Heart right ventricle (tissue), 16 donors: ENCODE measurements at regions of chr5 and their contacts with region 1.

Region 1: GRCh38 chr5:142769741-142770631 is at the start of gene ARHGAP26:
- DNase-seq: peak; percentile 97 to 98
- ATAC-seq: peak; percentile 97 to 98 (median 98)
- H3K4me3 ChIP-seq: peak within 1 kb of the TSS; percentile 58 to 98 (median 92)
- H3K27ac ChIP-seq: peak within 1 kb of the TSS; percentile 80 to 95 (median 92)
- H3K4me1 ChIP-seq: peaks cover 8 to 47% (median 40%) of the 10 kb centered on the region in 9 donors
- H3K27me3 ChIP-seq: no peaks in the 10 kb centered on the region
- CTCF ChIP-seq: peak in 6 of 9 donors; percentile 13 to 63 (median 50)
- total RNA-seq, gene ARHGAP26: 31.7 to 45.8 (median 39.1) TPM

Region 2: GRCh38 chr5:142716963-142717362 is 53.0 kb before region 1 on chr5:
- intact Hi-C with region 1: loop called in 3 of 10 experiments (anchors 5 kb)
- DNase-seq: peak; percentile 38 to 62
- ATAC-seq: peak; percentile 21 to 72 (median 61)
- H3K4me3 ChIP-seq: peak overlapping the region in 1 of 10 donors; percentile 22
- H3K27ac ChIP-seq: peak overlapping the region; percentile 13 to 82 (median 68)
- H3K4me1 ChIP-seq: peaks cover 6 to 54% (median 34%) of the 10 kb centered on the region in 9 donors
- H3K27me3 ChIP-seq: no peaks in the 10 kb centered on the region
- CTCF ChIP-seq: peak in 7 of 9 donors; percentile 32 to 64 (median 43)

Region 3: DNA sequence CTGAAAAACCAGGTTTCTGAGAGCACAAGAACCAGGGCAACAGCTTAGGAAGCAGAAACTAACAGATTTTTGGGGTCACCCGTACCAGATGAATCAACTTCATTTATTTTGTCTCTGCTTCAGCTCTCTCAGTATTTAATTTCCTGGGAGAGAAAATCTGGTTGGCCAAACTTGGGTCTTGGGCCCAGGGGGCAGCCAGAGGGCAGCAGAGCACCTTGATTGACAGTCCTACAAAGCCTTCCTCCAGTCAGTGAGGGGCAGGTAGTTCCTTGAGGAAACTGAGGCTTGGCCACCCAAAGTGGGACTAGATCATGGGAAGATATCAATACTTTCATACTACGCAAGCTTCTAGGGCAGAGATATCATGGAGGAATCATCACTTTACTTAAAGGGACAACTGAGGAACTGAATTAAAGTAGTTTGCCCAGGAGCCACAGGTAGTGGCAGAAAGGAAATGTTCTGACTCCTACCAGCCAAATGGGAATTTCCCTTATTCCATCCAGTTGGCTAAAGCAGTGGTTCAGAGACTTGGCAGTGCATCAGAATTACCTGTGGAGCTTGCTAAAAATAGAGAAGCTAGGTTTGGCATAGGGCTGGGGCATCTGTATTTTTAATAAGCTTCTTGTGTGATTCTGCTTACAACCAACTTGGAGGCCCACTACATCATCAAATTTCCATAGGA is 21.3 kb before region 1 on chr5:
- intact Hi-C with region 1: loop called in 1 of 10 experiments (anchors 2 kb)
- DNase-seq: peak; percentile 23 to 25
- ATAC-seq: peak in 4 of 8 donors; percentile 27 to 42 (median 33)
- H3K4me3 ChIP-seq: no peak overlapping the region
- H3K27ac ChIP-seq: peak overlapping the region in 2 of 10 donors; percentile 15 to 22
- H3K4me1 ChIP-seq: peaks cover 6 to 76% (median 55%) of the 10 kb centered on the region in 9 donors
- H3K27me3 ChIP-seq: no peaks in the 10 kb centered on the region
- CTCF ChIP-seq: peak; percentile 22 to 68 (median 54)

Region 4: DNA sequence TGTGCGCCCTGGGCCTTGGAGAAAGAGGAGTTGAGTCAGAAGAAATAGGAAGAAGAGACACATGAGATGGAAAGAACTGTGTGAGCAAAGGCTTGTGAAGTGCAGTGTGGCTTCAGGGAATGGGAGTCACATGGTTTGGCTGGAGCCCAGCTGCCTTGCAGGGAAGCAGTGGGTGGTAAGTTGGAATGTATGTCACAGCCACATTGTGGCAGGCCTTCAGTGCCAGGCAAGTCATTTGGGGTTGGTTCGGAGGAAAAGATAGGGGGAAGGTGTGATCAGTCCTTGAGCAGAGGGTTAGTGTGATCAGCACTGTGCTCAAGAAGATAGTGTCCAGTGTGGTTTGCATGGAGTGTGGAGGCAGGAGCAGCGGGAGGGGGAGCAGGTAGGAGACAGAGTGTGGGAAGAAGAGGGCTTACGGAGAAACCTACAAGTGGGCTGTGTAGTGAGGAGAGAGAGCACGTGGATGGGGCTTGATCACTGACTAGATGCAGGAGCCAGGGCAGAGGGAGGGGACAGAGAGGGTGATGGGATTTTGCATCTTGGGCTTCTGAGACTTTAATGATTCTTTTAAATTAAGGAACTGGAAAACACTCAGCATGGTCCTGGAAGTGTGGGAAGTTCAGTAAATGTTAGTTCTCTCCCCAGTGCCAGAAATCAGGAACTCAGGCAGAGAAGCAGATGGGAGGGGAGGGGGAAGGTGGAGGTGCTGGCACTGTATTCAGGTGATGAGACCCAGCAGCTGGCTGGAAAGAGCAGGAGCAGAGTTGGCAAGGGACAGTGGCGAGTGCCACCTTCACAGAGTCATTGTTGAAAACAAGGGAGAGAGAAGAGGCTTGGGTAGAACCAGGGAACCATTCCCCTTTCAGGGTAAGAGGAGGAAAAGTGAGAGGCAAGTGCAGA is 46.8 kb after region 1 on chr5:
- intact Hi-C with region 1: loop called in 4 of 10 experiments (anchors 2 to 5 kb)
- DNase-seq: peak; percentile 46 to 56
- ATAC-seq: peak in 5 of 8 donors; percentile 25 to 40 (median 36)
- H3K4me3 ChIP-seq: no peak overlapping the region
- H3K27ac ChIP-seq: peak overlapping the region; percentile 1 to 91 (median 49)
- H3K4me1 ChIP-seq: peaks cover 32 to 97% (median 81%) of the 10 kb centered on the region in 9 donors
- H3K27me3 ChIP-seq: no peaks in the 10 kb centered on the region
- CTCF ChIP-seq: no peak

Region 5: DNA sequence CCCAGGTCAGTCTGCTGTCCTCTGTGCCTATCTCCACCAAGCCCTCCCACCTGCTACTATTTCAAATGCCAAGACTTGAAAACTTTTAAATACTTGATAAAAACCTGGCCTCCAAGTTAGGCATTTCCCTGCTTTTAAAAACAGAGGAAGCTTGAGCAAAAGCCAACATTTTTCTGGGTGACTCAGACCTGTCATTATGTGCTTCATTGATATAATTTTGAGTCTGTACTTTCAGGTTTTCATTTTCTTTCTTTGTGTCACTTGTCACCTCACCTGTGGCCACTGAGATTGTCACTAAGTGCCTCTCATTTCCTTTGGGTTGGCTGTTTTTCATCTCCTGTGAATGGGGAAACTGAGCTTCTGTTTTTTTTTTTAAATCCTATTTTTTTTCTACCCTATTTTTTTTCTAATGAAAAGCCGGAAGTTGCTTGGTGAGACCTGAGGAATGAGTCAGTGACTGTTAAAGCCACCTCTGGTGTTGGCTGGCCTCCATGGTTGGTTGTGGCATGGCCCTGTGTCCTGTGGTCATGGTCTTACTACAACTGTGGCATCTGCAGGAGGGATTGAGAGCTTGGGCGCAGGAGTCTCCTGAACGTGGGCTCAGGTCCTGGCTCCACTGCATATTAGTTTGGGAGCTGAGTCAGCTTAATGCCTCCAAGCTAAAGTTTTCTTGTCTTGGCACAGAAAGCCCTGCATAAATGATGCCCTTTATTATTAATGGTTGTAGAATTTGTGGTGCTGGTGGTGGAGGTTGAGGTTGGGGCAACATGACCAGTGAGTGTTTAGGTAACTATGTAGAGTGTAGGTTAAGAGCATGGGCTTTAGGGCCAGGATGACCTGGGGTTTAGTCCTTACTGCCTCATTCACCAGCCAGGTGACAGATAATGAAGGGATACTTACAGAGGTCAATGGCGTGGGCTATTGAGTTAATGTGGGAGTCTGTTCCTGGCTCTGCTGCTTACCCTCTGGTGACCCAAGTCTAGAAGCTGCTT is 57.1 kb after region 1 on chr5:
- intact Hi-C with region 1: loop called in 1 of 10 experiments (anchors 5 kb)
- DNase-seq: no peak
- ATAC-seq: peak in 4 of 8 donors; percentile 7 to 29 (median 16)
- H3K4me3 ChIP-seq: no peak overlapping the region
- H3K27ac ChIP-seq: peak overlapping the region in 7 of 10 donors; percentile 18 to 76 (median 68)
- H3K4me1 ChIP-seq: peaks cover 24 to 97% (median 82%) of the 10 kb centered on the region in 9 donors
- H3K27me3 ChIP-seq: no peaks in the 10 kb centered on the region
- CTCF ChIP-seq: no peak

Region 6: GRCh38 chr5:142865414-142866045 is 95.5 kb after region 1 on chr5:
- intact Hi-C with region 1: loop called (anchors 2 to 5 kb)
- DNase-seq: no peak
- ATAC-seq: no peak
- H3K4me3 ChIP-seq: no peak overlapping the region
- H3K27ac ChIP-seq: peak overlapping the region in 4 of 10 donors; percentile 20 to 77 (median 36)
- H3K4me1 ChIP-seq: peaks cover 21 to 96% (median 84%) of the 10 kb centered on the region in 9 donors
- H3K27me3 ChIP-seq: no peaks in the 10 kb centered on the region
- CTCF ChIP-seq: no peak

Region 7: GRCh38 chr5:142874537-142874936 is 104.6 kb after region 1 on chr5:
- intact Hi-C with region 1: loop called in 6 of 10 experiments (anchors 5 kb)
- DNase-seq: peak; percentile 85 to 88
- ATAC-seq: peak; percentile 27 to 79 (median 69)
- H3K4me3 ChIP-seq: no peak overlapping the region
- H3K27ac ChIP-seq: peak overlapping the region in 8 of 10 donors; percentile 19 to 73 (median 50)
- H3K4me1 ChIP-seq: peaks cover 21 to 78% (median 64%) of the 10 kb centered on the region in 9 donors
- H3K27me3 ChIP-seq: no peaks in the 10 kb centered on the region
- CTCF ChIP-seq: no peak